Endothelial cell of umbilical vein (primary cell): ENCODE measurements at regions of chr15 and their contacts with region 1.

Region 1: GRCh38 chr15:62254137-62254934 is 89.3 kb upstream of the C2CD4B start:
- DNase-seq: peak; percentile 79
- H3K4me3 ChIP-seq: no peak overlapping the region
- H3K27ac ChIP-seq: no peak overlapping the region
- H3K4me1 ChIP-seq: no peaks in the 10 kb centered on the region
- H3K27me3 ChIP-seq: peaks cover 0 to 2% of the 10 kb centered on the region in 2 experiments
- CTCF ChIP-seq: peak; percentile 81 to 92
- POLR2A ChIP-seq: no peak

Region 2: GRCh38 chr15:61871926-61872522 is 382.3 kb before region 1 on chr15:
- CTCF ChIA-PET with region 1: interaction called, 36 read pairs
- POLR2A ChIA-PET with region 1: no interaction called
- dilution Hi-C with region 1: no loop called
- intact Hi-C with region 1: loop called (anchors 1 kb)
- DNase-seq: peak; percentile 49
- H3K4me3 ChIP-seq: no peak overlapping the region
- H3K27ac ChIP-seq: no peak overlapping the region
- H3K4me1 ChIP-seq: no peaks in the 10 kb centered on the region
- H3K27me3 ChIP-seq: no peaks in the 10 kb centered on the region
- CTCF ChIP-seq: peak in 1 of 2 donors; percentile 31
- POLR2A ChIP-seq: no peak

Region 3: DNA sequence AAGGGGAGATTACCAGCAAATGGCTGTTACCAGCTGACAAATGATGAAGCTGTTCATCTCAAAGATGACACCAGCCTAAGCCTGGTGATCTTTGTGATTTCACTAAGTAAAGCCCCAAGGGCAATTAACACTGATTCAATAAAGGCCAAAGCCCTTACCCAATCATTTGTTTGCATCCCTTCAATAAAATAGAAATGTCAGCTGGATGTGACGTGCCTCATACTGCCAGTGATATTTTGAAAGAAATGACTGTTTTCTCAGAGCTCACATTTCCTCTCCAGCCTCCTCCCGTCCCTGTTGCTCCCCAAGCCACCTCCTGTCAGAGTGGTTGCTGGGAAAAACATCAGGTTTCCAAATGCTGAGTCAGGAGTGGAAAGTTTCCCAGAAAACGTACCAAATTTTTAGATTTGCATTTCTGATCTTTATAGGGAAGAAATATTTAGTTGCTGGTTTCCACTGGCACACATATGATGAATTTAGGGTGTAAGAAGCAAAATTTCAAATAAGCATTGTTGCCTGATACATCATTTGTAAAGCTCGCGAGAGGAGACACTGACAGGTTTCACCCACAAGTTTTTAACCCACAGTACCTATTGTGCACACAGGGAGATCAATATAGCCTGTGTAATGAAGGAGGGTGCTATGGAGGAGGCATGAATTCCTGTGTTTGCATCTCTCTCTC is 166.5 kb before region 1 on chr15:
- CTCF ChIA-PET with region 1: interaction called, 11 read pairs
- POLR2A ChIA-PET with region 1: no interaction called
- dilution Hi-C with region 1: no loop called
- intact Hi-C with region 1: no loop called
- DNase-seq: peak; percentile 90
- H3K4me3 ChIP-seq: no peak overlapping the region
- H3K27ac ChIP-seq: no peak overlapping the region
- H3K4me1 ChIP-seq: peaks cover 17% of the 10 kb centered on the region
- H3K27me3 ChIP-seq: no peaks in the 10 kb centered on the region
- CTCF ChIP-seq: no peak
- POLR2A ChIP-seq: no peak

Region 4: GRCh38 chr15:62125773-62126172 is 128.6 kb before region 1 on chr15:
- CTCF ChIA-PET with region 1: interaction called, 139 read pairs
- POLR2A ChIA-PET with region 1: no interaction called
- dilution Hi-C with region 1: no loop called
- intact Hi-C with region 1: loop called (anchors 1 kb)
- DNase-seq: peak; percentile 91
- H3K4me3 ChIP-seq: no peak overlapping the region
- H3K27ac ChIP-seq: peak overlapping the region; percentile 99
- H3K4me1 ChIP-seq: peaks cover 35% of the 10 kb centered on the region
- H3K27me3 ChIP-seq: no peaks in the 10 kb centered on the region
- CTCF ChIP-seq: peak; percentile 56 to 66
- POLR2A ChIP-seq: no peak

Region 5: DNA sequence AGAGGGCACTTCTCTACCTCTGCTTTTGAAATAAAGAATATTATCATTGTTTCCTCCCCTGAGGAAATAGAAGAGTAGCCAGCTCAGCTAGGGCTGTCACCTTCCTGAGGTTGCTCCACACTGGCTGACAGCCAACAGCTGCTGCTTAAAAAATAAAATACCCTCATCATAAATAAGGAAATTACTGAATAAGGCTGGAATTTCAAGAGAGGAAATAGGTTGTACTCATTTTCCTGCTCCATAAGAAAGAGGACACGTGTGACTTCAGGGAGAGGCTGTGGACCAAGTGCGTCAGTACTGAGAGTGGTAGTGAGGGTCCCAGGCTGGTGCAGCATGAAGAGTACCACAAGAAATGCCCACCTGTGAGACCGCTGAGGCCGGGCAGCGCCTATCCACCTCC is 81.1 kb before region 1 on chr15:
- CTCF ChIA-PET with region 1: interaction called, 23 read pairs
- POLR2A ChIA-PET with region 1: no interaction called
- dilution Hi-C with region 1: no loop called
- intact Hi-C with region 1: no loop called
- DNase-seq: peak; percentile 97
- H3K4me3 ChIP-seq: peak overlapping the region in 2 of 3 experiments; percentile 10 to 68
- H3K27ac ChIP-seq: peak overlapping the region; percentile 100
- H3K4me1 ChIP-seq: peaks cover 42% of the 10 kb centered on the region
- H3K27me3 ChIP-seq: no peaks in the 10 kb centered on the region
- CTCF ChIP-seq: no peak
- POLR2A ChIP-seq: peak; percentile 51

Region 6: DNA sequence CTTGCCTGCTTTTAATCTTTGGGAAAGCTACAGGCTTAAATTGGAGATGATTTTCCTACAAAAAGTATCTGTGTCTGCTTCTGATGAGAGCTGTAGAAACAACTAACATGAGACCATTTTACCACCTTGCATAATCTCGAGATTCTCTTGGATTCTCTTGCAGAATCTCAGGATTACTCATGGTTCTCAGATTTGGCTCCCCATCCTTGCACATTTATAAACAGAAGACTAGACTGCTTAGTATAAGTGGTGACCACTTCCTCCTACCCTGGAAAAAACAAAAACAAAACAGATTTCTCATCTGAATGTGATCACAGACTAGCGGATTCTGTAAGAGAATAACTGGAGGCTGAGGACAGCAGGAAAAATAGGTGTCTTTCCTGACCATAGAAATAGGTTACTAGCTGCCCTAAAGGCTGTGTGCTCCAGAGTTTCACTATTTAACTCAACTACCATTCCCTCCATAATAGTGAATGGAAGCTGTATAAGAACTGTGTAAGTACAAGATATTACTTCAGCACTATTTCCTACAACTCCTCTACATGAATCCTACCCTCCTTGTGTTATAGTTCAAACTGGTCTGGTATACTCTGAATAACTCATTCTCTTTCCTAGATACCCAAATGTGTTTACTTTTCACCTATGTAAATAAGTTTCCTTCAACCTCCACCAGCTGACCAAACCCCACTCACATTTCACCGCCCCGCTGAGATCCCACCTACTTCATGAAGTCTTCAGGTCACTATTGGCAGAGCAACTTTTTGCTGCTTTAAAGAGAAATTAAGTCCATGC is 32.9 kb after region 1 on chr15:
- CTCF ChIA-PET with region 1: no interaction called
- POLR2A ChIA-PET with region 1: no interaction called
- dilution Hi-C with region 1: no loop called
- intact Hi-C with region 1: no loop called
- DNase-seq: no peak
- H3K4me3 ChIP-seq: no peak overlapping the region
- H3K27ac ChIP-seq: no peak overlapping the region
- H3K4me1 ChIP-seq: no peaks in the 10 kb centered on the region
- H3K27me3 ChIP-seq: peaks cover 6 to 15% of the 10 kb centered on the region in 2 experiments
- CTCF ChIP-seq: no peak
- POLR2A ChIP-seq: no peak

Region 7: DNA sequence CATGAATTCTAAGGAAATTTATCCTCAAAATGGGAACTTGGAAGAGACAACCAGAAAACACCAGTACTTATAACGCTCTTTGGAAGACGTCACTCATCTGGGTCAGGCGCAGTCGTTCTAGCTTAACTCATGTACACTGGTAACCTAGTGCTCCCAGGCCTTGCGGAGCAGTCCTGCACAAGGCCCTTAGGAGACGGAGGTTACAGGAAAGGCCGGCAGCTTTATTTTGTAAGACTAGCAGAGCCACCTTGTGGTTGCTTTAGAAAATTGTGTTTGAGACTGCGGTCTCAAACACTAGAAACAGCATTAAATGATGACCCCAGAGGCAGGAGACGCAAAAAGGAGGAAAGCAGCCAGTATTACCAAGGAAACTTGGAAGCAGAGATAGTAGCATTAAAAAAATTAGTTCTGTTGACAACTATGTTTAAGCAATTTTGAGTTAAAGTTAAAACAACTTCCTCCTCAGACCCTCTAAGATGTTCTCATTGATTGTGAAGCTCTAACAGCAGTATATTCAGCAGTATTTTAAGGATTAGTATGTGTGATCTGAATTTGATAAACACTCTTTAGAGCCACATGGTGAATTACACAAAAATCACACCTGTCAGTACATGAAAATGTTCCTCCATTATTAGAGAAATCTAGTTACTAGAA is 52.6 kb after region 1 on chr15:
- CTCF ChIA-PET with region 1: interaction called, 29 read pairs
- POLR2A ChIA-PET with region 1: no interaction called
- dilution Hi-C with region 1: no loop called
- intact Hi-C with region 1: loop called (anchors 2 kb)
- DNase-seq: peak; percentile 70
- H3K4me3 ChIP-seq: no peak overlapping the region
- H3K27ac ChIP-seq: no peak overlapping the region
- H3K4me1 ChIP-seq: peaks cover 3% of the 10 kb centered on the region
- H3K27me3 ChIP-seq: peaks cover 4 to 6% of the 10 kb centered on the region in 2 experiments
- CTCF ChIP-seq: peak; percentile 57 to 61
- POLR2A ChIP-seq: no peak